Calu3 (cell line): ENCODE measurements at regions of chr11 and their contacts with region 1.

Region 1: GRCh38 chr11:11010624-11011127 is 152.8 kb upstream of the ZBED5 start:
- DNase-seq: peak; percentile 60
- H3K4me3 Mint-ChIP-seq: peak overlapping the region; percentile 50
- H3K27ac Mint-ChIP-seq: no peak overlapping the region
- H3K4me1 Mint-ChIP-seq: peaks cover 14% of the 10 kb centered on the region
- H3K27me3 Mint-ChIP-seq: peaks cover 32% of the 10 kb centered on the region
- CTCF ChIP-seq: peak; percentile 49

Region 2: GRCh38 chr11:10770626-10771254 is 239.9 kb before region 1 on chr11:
- CTCF ChIA-PET with region 1: interaction called, 5 read pairs
- intact Hi-C with region 1: loop called (anchors 5 kb)
- DNase-seq: peak; percentile 67
- H3K4me3 Mint-ChIP-seq: no peak overlapping the region
- H3K27ac Mint-ChIP-seq: no peak overlapping the region
- H3K4me1 Mint-ChIP-seq: no peaks in the 10 kb centered on the region
- H3K27me3 Mint-ChIP-seq: no peaks in the 10 kb centered on the region
- CTCF ChIP-seq: peak; percentile 59

Region 3: GRCh38 chr11:10792398-10792975 is 218.2 kb before region 1 on chr11:
- CTCF ChIA-PET with region 1: interaction called, 28 read pairs
- intact Hi-C with region 1: no loop called
- DNase-seq: peak; percentile 96
- H3K4me3 Mint-ChIP-seq: peak overlapping the region; percentile 12
- H3K27ac Mint-ChIP-seq: no peak overlapping the region
- H3K4me1 Mint-ChIP-seq: peaks cover 34% of the 10 kb centered on the region
- H3K27me3 Mint-ChIP-seq: no peaks in the 10 kb centered on the region
- CTCF ChIP-seq: peak; percentile 89

Region 4: DNA sequence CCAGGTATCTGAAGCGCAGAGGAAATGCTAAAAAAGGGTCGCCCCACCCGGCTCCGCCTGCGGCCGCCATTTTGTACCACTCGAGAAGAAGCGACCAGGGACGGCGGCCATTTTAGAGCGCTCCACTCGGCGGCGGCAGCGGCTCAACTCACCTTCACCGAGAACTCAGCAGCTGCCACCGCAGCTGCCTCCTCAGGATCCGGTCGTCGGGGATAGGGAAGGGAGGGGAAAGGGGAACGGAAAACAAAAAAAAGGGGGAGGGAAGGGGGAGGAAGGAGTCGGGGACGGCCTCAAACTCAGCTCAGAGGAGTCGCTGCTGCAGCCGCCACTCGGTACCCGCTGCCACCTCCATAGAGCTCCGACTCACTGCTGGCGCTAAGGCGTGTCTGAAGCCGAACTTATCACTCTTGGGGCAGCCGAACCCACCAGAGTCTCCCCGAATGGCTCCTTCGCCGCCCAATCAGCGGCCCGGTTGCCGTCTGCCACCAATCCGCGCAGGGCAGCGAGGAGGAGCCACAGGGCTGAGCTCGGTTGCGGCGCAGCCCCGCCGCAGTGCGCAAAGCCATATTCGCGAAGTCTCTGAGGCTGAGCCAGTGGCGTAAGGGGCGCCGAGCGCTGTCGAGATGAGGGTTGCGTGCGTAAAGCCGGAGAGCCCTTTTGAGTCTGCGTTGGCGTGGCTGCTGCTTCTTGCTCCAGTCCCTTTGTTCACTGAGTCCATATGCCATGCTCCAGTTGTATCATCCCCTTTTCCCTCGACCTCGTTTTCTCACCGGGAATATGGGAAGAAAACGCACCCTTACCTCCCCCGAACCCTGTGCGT is 201.9 kb before region 1 on chr11 and contains the start of gene EIF4G2:
- CTCF ChIA-PET with region 1: interaction called, 10 read pairs
- intact Hi-C with region 1: no loop called
- DNase-seq: peak; percentile 97
- H3K4me3 Mint-ChIP-seq: peak within 1 kb of the TSS; percentile 95
- H3K27ac Mint-ChIP-seq: peak within 1 kb of the TSS; percentile 96
- H3K4me1 Mint-ChIP-seq: peaks cover 7% of the 10 kb centered on the region
- H3K27me3 Mint-ChIP-seq: no peaks in the 10 kb centered on the region
- CTCF ChIP-seq: no peak
- total RNA-seq, gene EIF4G2: 690 and 772 TPM in 2 replicates

Region 5: DNA sequence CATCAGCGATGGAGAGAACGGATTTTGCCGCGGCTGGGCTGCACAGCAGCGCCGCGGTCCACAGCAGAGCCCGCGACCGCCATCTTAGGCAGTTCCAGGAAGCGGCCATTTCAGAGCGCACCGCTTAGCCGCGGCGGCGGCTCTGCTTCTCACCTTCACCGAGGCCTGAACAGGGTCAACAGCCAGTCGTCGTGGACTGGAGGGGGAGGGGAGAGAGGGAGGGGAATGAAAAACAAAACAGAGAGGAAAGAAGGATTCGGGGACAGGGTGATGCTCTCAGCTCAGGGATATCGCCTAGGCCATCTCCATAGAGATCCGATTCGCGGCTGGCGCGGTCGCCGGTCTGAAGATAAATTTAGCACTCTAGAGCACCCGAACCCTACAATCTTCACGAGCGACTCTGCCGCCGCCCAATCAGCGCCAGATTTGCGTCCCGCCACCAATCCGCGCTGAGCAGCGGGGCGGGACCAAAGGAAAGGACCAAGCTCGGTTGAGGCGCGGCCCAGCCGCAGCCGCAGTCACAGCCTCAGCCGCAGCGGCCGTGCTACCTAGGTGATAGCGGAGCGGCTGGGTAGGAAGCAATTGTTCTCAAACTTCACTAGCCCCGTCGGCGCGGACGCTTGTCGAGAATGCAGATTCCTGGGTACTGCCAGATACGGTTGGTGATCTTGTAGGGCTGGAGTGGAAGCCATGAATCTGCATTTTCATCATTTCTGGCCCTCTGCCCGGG is 152.8 kb before region 1 on chr11 and contains the start of gene ZBED5:
- CTCF ChIA-PET with region 1: interaction called, 3 read pairs
- intact Hi-C with region 1: loop called (anchors 10 kb)
- DNase-seq: peak; percentile 95
- H3K4me3 Mint-ChIP-seq: peak within 1 kb of the TSS; percentile 96
- H3K27ac Mint-ChIP-seq: peak within 1 kb of the TSS; percentile 89
- H3K4me1 Mint-ChIP-seq: peaks cover 17% of the 10 kb centered on the region
- H3K27me3 Mint-ChIP-seq: no peaks in the 10 kb centered on the region
- CTCF ChIP-seq: no peak
- total RNA-seq, gene ZBED5: 49.8 and 51.4 TPM in 2 replicates

Region 6: DNA sequence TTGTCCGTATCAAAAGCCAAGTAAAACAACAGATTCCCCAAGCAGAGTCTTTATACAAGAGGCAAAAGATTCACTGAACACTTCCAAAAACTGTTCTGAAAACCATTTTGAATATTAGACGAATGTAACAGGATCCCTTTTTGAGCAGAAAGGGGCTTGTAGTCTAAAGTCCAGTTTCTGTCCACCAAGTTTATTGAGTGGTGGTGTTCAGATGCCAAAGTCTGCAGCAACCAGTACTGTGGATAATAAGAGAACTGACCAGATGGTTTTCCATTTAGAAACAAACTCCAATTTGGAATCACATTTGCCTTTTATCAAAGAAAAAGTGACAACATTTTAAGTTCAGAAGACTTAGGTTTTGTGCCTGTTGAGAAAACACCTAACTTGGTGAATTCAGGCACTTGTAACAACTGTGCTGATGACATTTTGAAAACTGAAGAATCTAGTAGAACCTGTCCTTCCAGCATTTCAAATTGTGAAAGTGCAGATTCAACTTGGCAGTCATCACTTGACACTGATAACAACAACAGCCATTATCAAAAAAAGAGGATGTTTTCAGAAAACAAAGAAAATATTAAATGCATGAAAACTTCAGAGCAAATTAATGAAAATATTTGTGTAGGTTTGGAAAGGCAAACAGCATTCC is 125.3 kb after region 1 on chr11:
- CTCF ChIA-PET with region 1: no interaction called
- intact Hi-C with region 1: no loop called
- DNase-seq: no peak
- H3K4me3 Mint-ChIP-seq: no peak overlapping the region
- H3K27ac Mint-ChIP-seq: no peak overlapping the region
- H3K4me1 Mint-ChIP-seq: peaks cover 8% of the 10 kb centered on the region
- H3K27me3 Mint-ChIP-seq: no peaks in the 10 kb centered on the region
- CTCF ChIP-seq: no peak